ENCODE measurements at regions of chr16 and their contacts with region 1.

Region 1: DNA sequence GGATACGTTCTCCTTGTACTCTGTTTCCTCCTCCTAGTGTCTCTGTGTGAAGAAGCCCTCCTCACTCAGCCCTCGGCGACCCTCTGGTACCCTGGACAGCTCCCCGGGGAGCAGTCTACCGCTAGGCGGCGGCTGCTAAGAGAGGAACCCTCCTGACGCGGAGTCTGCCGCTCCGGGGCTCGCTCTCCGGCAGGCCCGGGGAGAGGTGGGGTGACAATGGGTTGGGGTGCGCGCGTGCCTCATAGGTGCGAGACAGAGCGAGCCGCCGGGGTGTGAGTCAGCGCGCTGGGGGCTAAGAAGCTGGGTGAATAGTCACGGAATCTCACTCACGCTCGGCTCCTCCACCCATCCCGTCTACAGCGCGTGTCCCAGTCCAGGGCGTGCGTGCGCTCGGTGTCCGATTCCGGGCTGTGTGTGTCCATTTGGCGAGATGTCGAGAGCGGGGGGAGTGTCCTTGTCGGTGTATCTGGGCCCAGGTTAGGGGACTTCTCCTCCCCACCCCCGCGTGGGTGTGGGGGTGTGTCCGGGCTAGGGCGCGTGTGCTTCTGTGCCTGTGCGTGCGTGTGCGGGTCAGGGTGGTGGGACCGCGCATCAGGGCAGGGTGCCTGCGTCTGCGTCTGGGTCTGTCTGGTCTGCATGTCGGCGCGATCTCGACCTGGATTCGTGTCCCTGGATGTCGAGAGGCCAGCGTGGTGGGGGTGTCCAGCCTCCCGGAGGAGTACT is 578 bp upstream of the HS3ST2 start:
- DNase-seq: no peak
- ATAC-seq: no peak
- H3K4me3 Mint-ChIP-seq: no peak overlapping the region
- H3K27ac Mint-ChIP-seq: no peak overlapping the region
- H3K4me1 Mint-ChIP-seq: peaks cover 8% of the 10 kb centered on the region
- H3K27me3 Mint-ChIP-seq: peaks cover 51% of the 10 kb centered on the region
- CTCF ChIP-seq: no peak

Region 2: GRCh38 chr16:22797551-22797950 is 15.8 kb before region 1 on chr16:
- CTCF ChIA-PET with region 1: no interaction called
- POLR2A ChIA-PET with region 1: no interaction called
- intact Hi-C with region 1: no loop called
- DNase-seq: no peak
- ATAC-seq: no peak
- H3K4me3 Mint-ChIP-seq: no peak overlapping the region
- H3K27ac Mint-ChIP-seq: no peak overlapping the region
- H3K4me1 Mint-ChIP-seq: no peaks in the 10 kb centered on the region
- H3K27me3 Mint-ChIP-seq: peaks cover 11% of the 10 kb centered on the region
- CTCF ChIP-seq: no peak

Region 3: DNA sequence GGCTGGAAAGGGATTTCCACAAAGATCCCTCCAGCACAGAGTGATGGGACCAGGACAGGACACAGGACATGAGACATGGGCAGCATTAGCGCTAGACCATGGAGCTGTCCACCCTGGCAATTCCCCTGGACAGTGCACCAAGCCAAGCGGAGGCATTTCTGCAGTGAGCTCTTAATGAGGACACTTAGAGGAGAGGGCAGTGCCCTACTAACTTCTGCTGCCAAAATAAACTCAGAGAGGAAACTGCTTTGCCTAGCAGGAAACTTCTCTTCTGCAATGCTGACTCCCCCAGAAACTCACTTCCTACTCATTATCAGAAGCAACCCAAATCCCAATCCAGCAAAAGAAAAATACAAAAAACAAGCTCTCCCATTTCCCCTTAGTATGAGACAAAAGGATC is 119.8 kb after region 1 on chr16:
- CTCF ChIA-PET with region 1: no interaction called
- POLR2A ChIA-PET with region 1: no interaction called
- intact Hi-C with region 1: loop called (anchors 10 kb)
- DNase-seq: no peak
- ATAC-seq: no peak
- H3K4me3 Mint-ChIP-seq: peak overlapping the region; percentile 60
- H3K27ac Mint-ChIP-seq: peak overlapping the region; percentile 13
- H3K4me1 Mint-ChIP-seq: peaks cover 48% of the 10 kb centered on the region
- H3K27me3 Mint-ChIP-seq: no peaks in the 10 kb centered on the region
- CTCF ChIP-seq: no peak